ENCODE measurements at regions of chr6 and their contacts with region 1.

Region 1: GRCh38 chr6:9412951-9413559 is 977.7 kb upstream of the SLC35B3 start:
- DNase-seq: peak; percentile 19 to 58 (median 38)
- H3K4me3 ChIP-seq: no peak overlapping the region
- H3K27ac ChIP-seq: no peak overlapping the region
- H3K4me1 ChIP-seq: no peaks in the 10 kb centered on the region
- H3K27me3 ChIP-seq: no peaks in the 10 kb centered on the region
- CTCF ChIP-seq: peak in 5 of 6 experiments; percentile 35 to 53 (median 49)
- POLR2A ChIP-seq: no peak

Region 2: DNA sequence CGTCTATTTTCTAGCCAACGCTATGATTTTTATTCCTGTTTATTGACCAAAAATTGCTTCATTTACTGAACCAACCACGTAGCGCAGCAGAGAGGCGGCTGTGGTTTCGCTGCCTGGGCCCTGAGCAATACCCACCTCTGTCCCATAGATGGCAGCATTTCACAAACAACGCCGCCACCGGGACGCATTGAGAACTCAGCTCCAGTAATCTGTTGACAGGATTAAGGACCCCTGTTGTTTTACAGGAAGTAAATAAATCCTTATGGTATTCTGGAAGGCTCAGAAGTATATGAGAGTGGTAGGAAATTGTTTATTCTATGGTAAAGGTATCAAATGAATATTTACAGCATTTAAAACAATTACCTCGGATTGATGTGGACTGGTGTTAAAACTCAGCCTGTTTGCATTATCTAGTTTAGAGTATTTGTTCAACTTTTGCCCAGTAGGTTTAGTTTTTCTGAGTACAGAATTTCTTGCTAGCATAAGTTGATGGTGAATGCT is 429.8 kb before region 1 on chr6:
- intact Hi-C with region 1: loop called in 1 of 2 experiments (anchors 10 kb)
- DNase-seq: peak; percentile 42 to 84 (median 68)
- H3K4me3 ChIP-seq: no peak overlapping the region
- H3K27ac ChIP-seq: no peak overlapping the region
- H3K4me1 ChIP-seq: no peaks in the 10 kb centered on the region
- H3K27me3 ChIP-seq: no peaks in the 10 kb centered on the region
- CTCF ChIP-seq: peak; percentile 86 to 98 (median 90)
- POLR2A ChIP-seq: no peak